GM10248 (cell line): ENCODE measurements at regions of chrX and their contacts with region 1.

Region 1: DNA sequence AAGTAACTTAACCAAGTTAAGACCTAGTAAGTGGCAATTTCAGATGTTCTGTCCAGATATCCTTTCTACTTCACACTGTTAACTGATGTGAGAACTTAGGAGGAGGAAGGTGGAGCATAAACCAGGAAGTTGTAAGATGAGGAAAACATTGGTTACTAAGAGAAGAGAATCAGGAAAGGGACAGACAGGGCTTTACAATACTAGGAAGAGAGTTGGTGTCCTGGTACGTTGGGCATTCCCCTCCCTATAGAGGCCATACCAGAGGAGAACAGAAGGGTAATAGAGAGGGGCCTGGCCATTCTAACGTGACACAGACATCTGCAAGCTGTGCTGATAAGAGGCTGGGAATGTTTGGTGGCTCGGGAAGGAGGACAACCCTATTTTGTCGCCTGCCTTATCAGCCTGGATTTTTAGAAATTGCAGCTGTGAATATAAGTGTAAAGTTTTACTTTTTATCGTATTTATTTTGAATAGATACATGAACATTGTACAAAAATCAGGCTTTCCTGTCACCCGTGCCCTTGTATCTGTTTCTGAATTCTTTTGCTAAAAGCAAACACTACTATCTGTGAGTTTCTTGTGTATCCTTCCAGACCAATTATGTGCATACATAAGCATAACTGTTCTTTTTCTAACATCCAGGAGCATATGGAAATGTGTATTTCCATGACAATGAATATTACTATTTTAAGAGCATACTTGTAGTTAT is 53.5 kb upstream of the HPRT1 start:
- DNase-seq: no peak
- CTCF ChIP-seq: no peak

Region 2: GRCh38 chrX:134396174-134396573 is 10.3 kb before region 1 on chrX:
- CTCF ChIA-PET with region 1: interaction called, 12 read pairs
- POLR2A ChIA-PET with region 1: no interaction called
- DNase-seq: peak; percentile 12
- CTCF ChIP-seq: peak; percentile 46